ENCODE measurements at regions of chr10 and their contacts with region 1.

Region 1: DNA sequence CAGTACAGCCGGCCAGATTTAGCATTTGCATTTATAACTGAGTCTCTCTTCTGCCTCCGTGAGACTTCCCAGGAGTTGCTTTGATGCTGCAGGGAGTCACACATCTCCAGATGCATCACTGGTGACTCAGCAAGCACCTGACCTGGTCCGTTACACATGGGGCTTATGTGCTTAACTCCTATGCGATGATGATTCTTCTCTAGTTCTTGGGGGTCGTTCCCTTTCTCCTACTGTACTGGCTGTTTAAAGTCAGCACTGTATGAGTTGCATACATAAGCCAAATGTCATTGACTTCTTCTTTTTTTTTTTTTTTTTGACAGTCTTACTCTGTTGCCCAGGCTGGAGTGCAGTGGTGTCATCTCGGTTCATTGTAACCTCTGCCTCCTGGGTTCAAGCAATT is 13.0 kb upstream of the AKR1E2 start:
- DNase-seq: no peak
- H3K4me3 Mint-ChIP-seq: no peak overlapping the region
- H3K27ac Mint-ChIP-seq: no peak overlapping the region
- H3K4me1 Mint-ChIP-seq: no peaks in the 10 kb centered on the region
- H3K27me3 Mint-ChIP-seq: peaks cover 10% of the 10 kb centered on the region

Region 2: GRCh38 chr10:4802706-4803487 is 10.1 kb before region 1 on chr10:
- intact Hi-C with region 1: no loop called
- DNase-seq: no peak
- H3K4me3 Mint-ChIP-seq: no peak overlapping the region
- H3K27ac Mint-ChIP-seq: no peak overlapping the region
- H3K4me1 Mint-ChIP-seq: no peaks in the 10 kb centered on the region
- H3K27me3 Mint-ChIP-seq: peaks cover 24% of the 10 kb centered on the region

Region 3: DNA sequence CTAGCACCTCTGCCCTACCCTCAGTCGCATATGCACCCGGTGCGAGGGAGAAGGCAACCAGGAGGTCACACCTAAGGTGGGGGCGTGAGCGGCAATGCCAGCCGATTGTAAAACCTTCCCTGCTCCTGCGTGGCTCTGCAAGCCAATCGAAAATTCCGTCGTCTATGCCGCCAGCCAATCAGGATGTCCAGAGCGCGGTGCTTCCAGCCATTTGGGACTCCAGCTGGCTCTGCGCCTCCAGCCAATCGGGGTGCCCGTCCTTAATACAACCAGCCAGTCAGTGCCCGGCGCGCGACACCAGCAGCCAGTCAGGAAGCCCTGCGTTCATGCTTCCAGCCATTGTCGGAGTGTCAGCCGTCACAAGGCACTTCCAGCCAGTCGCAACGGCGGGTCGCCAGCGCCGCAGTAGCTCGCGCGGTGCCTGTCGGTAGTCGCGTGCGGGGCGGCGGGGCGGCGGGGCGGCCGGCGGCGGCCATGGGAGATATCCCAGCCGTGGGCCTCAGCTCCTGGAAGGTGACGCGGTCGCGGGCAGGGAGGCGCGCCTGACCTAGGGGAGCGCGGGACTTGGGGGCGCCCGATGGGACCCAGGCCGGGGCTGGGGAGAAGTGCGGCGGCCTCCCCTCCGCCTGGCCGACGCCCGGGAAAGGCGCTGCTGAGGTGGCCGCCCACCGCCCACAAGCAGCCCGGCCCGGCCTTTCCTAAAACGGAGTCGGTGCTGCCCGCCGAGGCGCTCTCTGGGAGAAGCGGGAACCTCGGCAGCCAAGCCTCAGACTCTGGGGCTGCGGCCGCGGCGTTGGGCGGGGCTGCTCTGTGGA is 13.0 kb after region 1 on chr10 and contains the start of gene AKR1E2:
- intact Hi-C with region 1: loop called (anchors 1 kb)
- DNase-seq: peak; percentile 82
- H3K4me3 Mint-ChIP-seq: peak within 1 kb of the TSS; percentile 82
- H3K27ac Mint-ChIP-seq: peak within 1 kb of the TSS; percentile 69
- H3K4me1 Mint-ChIP-seq: peaks cover 21% of the 10 kb centered on the region
- H3K27me3 Mint-ChIP-seq: peaks cover 45% of the 10 kb centered on the region
- total RNA-seq, gene AKR1E2: 6.2 and 6.6 TPM in 2 replicates

Region 4: GRCh38 chr10:5196702-5197113 is 383.7 kb after region 1 on chr10 and contains the start of gene AKR1C4:
- intact Hi-C with region 1: no loop called
- DNase-seq: no peak
- H3K4me3 Mint-ChIP-seq: no peak within 1 kb of the TSS
- H3K27ac Mint-ChIP-seq: no peak within 1 kb of the TSS
- H3K4me1 Mint-ChIP-seq: no peaks in the 10 kb centered on the region
- H3K27me3 Mint-ChIP-seq: peaks cover 5% of the 10 kb centered on the region
- total RNA-seq, gene AKR1C4: not detected in 2 replicates

Region 5: DNA sequence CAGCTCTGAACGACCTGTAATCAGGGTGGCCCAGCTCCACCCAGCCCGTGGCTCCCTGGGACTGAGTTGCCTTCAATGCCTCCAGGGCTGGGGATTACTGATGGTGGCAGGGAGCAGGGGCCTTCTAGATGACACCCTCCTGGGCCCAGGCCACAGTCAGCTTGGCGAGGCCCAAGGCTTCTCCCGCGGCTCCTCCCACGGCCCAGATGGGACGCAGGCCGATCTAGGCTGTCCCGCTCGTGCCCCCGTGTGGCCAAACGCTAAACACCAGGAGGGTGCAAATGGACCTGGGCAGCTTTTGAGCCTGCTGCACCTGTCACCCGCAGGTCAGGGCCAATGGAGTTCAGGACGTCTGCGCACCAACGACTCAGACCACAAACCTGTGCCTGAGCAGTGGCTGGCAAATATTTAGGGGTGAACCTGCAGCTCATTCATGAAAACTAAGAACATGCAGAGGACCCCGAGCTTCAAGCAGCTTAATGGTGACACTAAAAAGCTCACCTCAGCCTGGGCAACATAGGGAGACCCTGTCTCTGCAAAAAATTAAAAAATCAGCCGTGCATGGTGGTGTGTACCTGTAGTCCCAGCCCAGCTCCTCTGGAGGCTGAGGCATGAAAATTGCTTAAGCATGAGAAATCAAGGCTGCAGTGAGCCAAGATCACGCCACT is 810.2 kb after region 1 on chr10:
- intact Hi-C with region 1: loop called (anchors 1 kb)
- DNase-seq: peak; percentile 72
- H3K4me3 Mint-ChIP-seq: no peak overlapping the region
- H3K27ac Mint-ChIP-seq: no peak overlapping the region
- H3K4me1 Mint-ChIP-seq: no peaks in the 10 kb centered on the region
- H3K27me3 Mint-ChIP-seq: peaks cover 6% of the 10 kb centered on the region

Measured in activated T-helper 1 cell treated with anti-CD3 and anti-CD28 coated beads, Interleukin-12 subunit alpha, Interleukin-12 subunit beta, Interleukin-2, Interleukin-4 antibody, amounts not matched to agents 30 ng/mL and 10 ng/mL and 1 ng/mL, durations not matched to agents 14 hours and 24 hours and 36 hours (primary cell).